ENCODE measurements at regions of chr22 and their contacts with region 1.

Region 1: GRCh38 chr22:50562523-50563412 is at the start of gene SYCE3:
- DNase-seq: peak; percentile 99
- ATAC-seq: peak; percentile 96
- H3K4me3 Mint-ChIP-seq: peak within 1 kb of the TSS; percentile 83
- H3K27ac Mint-ChIP-seq: peak within 1 kb of the TSS; percentile 84
- H3K4me1 Mint-ChIP-seq: peaks cover 19% of the 10 kb centered on the region
- H3K27me3 Mint-ChIP-seq: no peaks in the 10 kb centered on the region
- total RNA-seq, gene SYCE3: 3.8 TPM

Region 2: DNA sequence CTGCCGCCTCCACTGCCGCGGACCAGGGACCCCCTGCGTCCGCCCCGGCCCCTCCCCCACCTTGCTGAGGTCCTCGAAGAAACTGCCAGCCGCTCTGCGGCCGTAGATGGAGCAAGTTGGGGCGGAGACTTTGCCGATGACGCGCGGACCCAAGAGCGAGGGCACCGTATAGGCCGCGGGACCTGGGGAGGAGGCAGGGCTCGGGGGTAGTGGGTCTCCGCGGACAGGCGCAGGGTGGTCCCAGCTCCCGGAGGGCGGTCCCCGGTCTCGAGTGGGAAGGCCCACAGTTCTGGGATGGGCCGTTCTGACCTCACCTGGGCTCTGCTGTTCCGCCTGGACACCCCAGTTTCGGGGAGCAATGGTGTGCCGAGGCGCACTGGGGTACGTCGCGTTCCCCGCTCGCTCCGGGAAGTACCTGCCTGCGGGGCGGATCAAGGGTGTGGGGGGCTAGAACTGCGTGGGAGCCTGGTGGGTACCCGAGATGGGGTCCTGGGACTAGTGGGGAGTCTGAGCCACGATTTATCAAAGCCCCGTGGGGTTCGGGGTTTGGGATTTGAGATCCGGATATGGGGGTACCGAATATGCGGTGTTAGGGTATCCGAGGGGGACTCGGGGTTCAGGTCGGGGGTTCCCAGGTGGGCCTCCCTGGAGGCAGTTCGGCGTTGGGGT is 31.8 kb before region 1 on chr22:
- CTCF ChIA-PET with region 1: interaction called, 43 read pairs
- POLR2A ChIA-PET with region 1: interaction called, 8 read pairs
- intact Hi-C with region 1: loop called (anchors 1 to 2 kb)
- DNase-seq: peak; percentile 92
- ATAC-seq: peak; percentile 45
- H3K4me3 Mint-ChIP-seq: peak overlapping the region; percentile 87
- H3K27ac Mint-ChIP-seq: peak overlapping the region; percentile 97
- H3K4me1 Mint-ChIP-seq: peaks cover 45% of the 10 kb centered on the region
- H3K27me3 Mint-ChIP-seq: no peaks in the 10 kb centered on the region

Region 3: DNA sequence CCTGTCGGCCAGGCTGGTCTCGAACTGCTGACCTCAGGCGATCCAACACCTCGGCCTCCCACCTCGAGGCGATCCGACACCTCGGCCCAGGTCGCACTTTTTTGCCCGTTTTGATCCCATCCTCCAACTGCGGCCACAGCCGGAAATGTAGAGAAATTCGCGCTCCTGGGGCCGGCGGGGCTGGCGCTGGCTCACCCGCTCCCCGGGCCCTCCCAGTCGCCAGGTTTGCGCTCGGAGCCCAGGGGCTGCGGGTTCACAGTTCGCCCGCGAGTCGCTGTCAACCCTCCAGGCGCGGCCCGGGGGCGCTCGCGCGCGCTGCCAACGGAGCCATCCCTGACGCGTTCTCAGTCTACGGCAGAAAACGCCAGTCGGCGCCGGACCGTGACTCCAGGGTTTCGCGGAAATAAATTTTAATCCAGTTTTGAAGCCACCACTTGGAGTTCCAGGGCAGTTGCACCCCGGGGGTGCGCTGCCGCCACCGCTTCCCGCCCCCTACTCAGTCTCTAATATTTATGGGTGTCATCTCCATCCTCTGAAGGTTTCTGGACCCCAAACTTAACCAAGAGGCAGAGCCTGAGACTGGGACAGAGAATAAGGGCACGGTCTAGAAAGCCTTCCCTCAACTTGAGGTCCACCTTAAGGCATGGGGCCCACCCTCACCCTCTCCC is 18.6 kb before region 1 on chr22:
- CTCF ChIA-PET with region 1: interaction called, 29 read pairs
- POLR2A ChIA-PET with region 1: no interaction called
- intact Hi-C with region 1: loop called in 1 of 2 experiments (anchors 1 kb)
- DNase-seq: peak; percentile 94
- ATAC-seq: peak; percentile 49
- H3K4me3 Mint-ChIP-seq: peak overlapping the region; percentile 35
- H3K27ac Mint-ChIP-seq: peak overlapping the region; percentile 78
- H3K4me1 Mint-ChIP-seq: peaks cover 61% of the 10 kb centered on the region
- H3K27me3 Mint-ChIP-seq: no peaks in the 10 kb centered on the region

Region 4: DNA sequence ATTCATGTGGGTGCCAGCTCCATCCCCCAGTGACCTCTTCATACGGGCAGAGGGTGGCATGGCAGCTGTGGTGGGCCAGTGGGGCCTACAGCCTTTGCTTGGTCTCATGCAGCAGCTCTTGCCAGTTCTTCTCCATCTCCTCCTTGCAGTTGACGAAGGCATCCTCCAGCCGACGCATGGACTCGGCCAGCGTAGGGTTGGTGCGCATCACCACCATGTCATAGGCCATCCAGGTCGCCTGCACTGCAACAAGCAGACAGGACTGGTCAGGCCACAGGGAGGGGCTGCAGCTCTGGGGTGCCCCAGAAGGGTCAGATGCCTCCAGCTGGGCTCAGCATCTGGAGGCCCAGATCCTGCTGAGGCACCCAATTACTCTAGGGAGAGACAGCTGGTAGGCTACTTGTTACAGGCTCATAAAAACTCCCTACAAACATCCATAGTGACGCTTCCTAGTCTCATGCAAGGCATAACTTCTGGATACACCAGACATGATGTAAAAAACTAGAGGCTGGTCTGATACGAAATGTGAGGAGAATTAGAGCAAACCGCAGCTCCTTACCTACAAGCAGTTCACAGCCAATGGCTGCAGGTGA is 11.5 kb before region 1 on chr22:
- CTCF ChIA-PET with region 1: interaction called, 29 read pairs
- POLR2A ChIA-PET with region 1: no interaction called
- intact Hi-C with region 1: no loop called
- DNase-seq: no peak
- ATAC-seq: no peak
- H3K4me3 Mint-ChIP-seq: no peak overlapping the region
- H3K27ac Mint-ChIP-seq: no peak overlapping the region
- H3K4me1 Mint-ChIP-seq: peaks cover 12% of the 10 kb centered on the region
- H3K27me3 Mint-ChIP-seq: no peaks in the 10 kb centered on the region

Region 5: GRCh38 chr22:50576070-50576469 is 13.3 kb after region 1 on chr22:
- CTCF ChIA-PET with region 1: interaction called, 14 read pairs
- POLR2A ChIA-PET with region 1: no interaction called
- intact Hi-C with region 1: no loop called
- DNase-seq: no peak
- ATAC-seq: no peak
- H3K4me3 Mint-ChIP-seq: no peak overlapping the region
- H3K27ac Mint-ChIP-seq: no peak overlapping the region
- H3K4me1 Mint-ChIP-seq: peaks cover 9% of the 10 kb centered on the region
- H3K27me3 Mint-ChIP-seq: no peaks in the 10 kb centered on the region